Adrenal gland (tissue), 19 donors: ENCODE measurements at regions of chr17 and their contacts with region 1.

Region 1: DNA sequence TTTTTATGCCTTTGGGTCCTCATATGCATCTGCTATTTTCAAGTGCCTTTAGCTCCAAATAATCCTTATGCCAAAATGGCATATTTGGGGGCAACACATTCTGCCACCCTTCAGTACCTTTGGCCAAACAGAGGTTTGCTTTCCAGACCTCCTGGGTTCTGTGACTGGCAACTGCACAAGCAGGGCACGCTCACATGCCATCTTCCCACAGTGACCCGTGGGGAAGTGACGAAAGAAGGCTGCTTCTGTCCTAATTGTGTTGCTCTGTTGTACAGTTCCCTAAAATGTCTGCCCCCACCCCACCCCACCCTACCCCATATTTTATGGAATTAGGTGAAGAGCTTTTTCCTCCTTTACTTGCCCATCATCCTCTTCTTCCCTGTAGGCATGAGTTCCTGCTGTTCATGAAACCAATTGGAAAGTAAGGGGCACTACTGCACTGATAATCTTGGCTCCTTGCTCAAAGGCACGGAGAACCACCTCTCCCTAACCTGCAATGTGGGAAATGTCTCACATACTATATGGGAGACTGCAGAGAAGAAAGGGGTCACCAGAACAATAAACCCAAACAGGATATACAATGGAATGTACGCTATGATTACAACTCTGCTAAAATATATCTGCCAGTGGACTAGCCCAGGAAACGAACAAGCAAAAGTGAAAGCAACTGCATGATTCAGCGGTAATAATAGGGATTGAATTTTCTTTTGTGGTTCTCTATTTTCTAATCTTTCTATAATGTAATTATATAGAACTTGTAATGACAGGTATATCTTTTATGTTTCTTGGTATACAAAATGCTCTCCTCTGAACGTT is 3.3 kb upstream of the SLFN12L start:
- DNase-seq: peak in 5 of 7 donors; percentile 33 to 66 (median 45)
- H3K4me3 ChIP-seq: peak overlapping the region in 1 of 4 donors; percentile 57
- H3K27ac ChIP-seq: peak overlapping the region in 4 of 5 donors; percentile 43 to 86 (median 56)
- H3K4me1 ChIP-seq: no peaks in the 10 kb centered on the region
- H3K27me3 ChIP-seq: no peaks in the 10 kb centered on the region
- CTCF ChIP-seq: no peak
- POLR2A ChIP-seq: no peak

Region 2: DNA sequence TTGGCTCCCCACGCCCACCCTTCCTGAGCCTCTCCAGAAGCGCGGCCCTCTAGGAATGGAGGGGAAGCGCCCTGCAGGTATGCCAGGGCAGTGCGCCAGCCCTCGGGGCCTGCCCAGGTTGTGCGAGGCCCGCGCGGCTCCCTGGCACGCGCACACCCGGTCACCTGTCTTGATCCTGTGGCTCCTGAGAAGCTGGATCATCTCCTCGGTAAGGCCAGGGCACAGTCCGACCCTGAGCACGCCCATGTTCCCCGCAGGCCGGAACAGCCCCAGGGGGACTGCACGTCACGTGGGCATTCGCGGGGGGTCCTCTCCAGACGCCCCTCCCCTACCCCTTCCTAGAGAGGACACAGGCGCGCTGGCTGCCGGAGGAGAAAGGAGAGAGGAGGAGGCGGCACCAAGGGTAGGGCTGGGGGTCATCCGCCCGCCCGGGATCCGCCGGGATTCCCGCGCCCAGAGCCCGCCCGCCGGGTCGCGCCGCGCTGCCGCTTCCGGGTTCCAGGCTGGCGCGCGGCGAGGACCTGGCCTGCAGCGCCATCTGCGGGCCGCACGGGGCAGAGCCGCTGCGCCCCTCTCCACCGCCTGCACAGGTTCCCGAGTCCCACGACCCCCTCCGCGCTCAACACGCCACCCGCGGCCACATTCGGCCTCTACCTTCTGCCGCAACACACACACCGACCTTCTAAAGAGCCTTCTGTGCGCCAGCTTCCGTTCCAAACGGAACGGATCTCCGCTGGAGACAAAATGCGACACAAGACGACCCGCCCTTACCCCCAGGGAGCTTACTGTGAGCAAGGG is 421.2 kb before region 1 on chr17 and contains the start of gene RAD51D:
- intact Hi-C with region 1: no loop called
- DNase-seq: peak; percentile 58 to 80 (median 70)
- H3K4me3 ChIP-seq: peak within 1 kb of the TSS; percentile 12 to 83 (median 78)
- H3K27ac ChIP-seq: peak within 1 kb of the TSS in 3 of 5 donors; percentile 38 to 67 (median 43)
- H3K4me1 ChIP-seq: peaks cover 7 to 12% of the 10 kb centered on the region in 2 donors
- H3K27me3 ChIP-seq: no peaks in the 10 kb centered on the region
- CTCF ChIP-seq: peak; percentile 48 to 98 (median 82)
- POLR2A ChIP-seq: peak; percentile 19 to 25
- total RNA-seq, gene RAD51D: 3.3 to 14.3 (median 8.7) TPM

Region 3: GRCh38 chr17:35170968-35171771 is 369.6 kb before region 1 on chr17:
- intact Hi-C with region 1: loop called (anchors 5 to 10 kb)
- DNase-seq: peak in 2 of 7 donors; percentile 4 to 21
- H3K4me3 ChIP-seq: no peak overlapping the region
- H3K27ac ChIP-seq: no peak overlapping the region
- H3K4me1 ChIP-seq: no peaks in the 10 kb centered on the region
- H3K27me3 ChIP-seq: no peaks in the 10 kb centered on the region
- CTCF ChIP-seq: peak in 5 of 6 experiments; percentile 37 to 51 (median 39)
- POLR2A ChIP-seq: no peak

Region 4: GRCh38 chr17:35352284-35352683 is 188.5 kb before region 1 on chr17:
- intact Hi-C with region 1: no loop called
- DNase-seq: no peak
- H3K4me3 ChIP-seq: no peak overlapping the region
- H3K27ac ChIP-seq: no peak overlapping the region
- H3K4me1 ChIP-seq: peaks cover 0 to 1% of the 10 kb centered on the region in 2 donors
- H3K27me3 ChIP-seq: no peaks in the 10 kb centered on the region
- CTCF ChIP-seq: no peak
- POLR2A ChIP-seq: no peak